ENCODE measurements at regions of chr14 and their contacts with region 1.

Region 1: DNA sequence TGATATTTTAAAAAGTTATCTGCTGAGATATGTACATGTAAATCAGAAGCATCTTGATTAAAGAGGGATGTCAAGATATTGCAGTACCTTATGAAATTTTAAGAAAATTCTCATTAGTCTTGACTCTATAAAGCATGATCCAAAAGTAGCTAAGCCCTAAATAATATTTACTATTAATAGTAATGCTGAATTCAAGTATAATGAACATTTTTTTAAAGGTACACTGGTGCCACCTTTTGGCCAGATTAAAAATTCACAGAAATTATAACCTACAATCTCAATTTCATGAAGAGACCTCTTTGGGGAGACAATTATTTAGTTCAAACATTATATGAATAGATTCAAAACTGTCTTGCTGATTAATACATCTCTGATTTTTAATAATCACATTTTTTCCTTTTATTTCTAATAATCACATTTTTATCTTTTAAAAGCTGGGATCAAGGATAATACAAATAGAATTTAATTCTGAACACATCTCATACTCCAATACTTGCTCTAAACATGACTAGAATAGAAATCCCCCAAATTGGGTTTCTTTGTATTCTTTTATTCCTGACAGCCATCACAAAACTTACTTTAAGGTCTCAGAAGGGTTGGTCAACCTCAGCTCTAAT is 13.4 kb downstream of the AKAP5 start:
- DNase-seq: no peak
- H3K4me3 ChIP-seq: no peak overlapping the region
- H3K27ac ChIP-seq: no peak overlapping the region
- H3K4me1 ChIP-seq: no peaks in the 10 kb centered on the region
- H3K27me3 ChIP-seq: no peaks in the 10 kb centered on the region
- CTCF ChIP-seq: peak in 1 of 3 donors; percentile 33
- EP300 ChIP-seq: no peak
- POLR2A ChIP-seq: no peak

Region 2: DNA sequence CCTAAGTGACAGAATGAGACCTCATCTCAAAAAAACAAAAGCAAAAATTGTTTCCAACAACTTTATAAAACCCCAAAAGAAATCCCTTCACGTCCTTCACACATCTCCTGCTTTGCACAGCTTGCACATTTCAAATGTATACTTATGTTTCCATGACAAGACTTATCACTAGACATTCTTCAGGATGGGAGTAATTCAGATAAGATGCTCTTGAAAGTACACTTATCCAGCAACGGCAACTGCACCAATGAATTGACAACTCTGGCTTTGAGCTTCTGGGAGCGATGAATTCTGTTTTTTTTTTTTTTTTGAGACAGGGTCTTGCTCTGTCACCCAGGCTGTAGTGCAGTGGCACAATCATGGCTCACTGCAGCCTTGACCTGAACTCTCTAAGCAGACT is 44.2 kb before region 1 on chr14:
- intact Hi-C with region 1: loop called in 1 of 4 experiments (anchors 5 kb)
- DNase-seq: no peak
- H3K4me3 ChIP-seq: no peak overlapping the region
- H3K27ac ChIP-seq: no peak overlapping the region
- H3K4me1 ChIP-seq: no peaks in the 10 kb centered on the region
- H3K27me3 ChIP-seq: no peaks in the 10 kb centered on the region
- CTCF ChIP-seq: no peak
- EP300 ChIP-seq: no peak
- POLR2A ChIP-seq: no peak

Region 3: GRCh38 chr14:65462411-65462810 is 983.7 kb after region 1 on chr14:
- intact Hi-C with region 1: loop called in 1 of 4 experiments (anchors 5 kb)
- DNase-seq: no peak
- H3K4me3 ChIP-seq: no peak overlapping the region
- H3K27ac ChIP-seq: no peak overlapping the region
- H3K4me1 ChIP-seq: no peaks in the 10 kb centered on the region
- H3K27me3 ChIP-seq: no peaks in the 10 kb centered on the region
- CTCF ChIP-seq: no peak
- EP300 ChIP-seq: no peak
- POLR2A ChIP-seq: no peak

Measured in ovary (tissue), 10 donors.